ENCODE measurements at regions of chr9 and their contacts with region 1.

Region 1: GRCh38 chr9:120792898-120793765 is at the start of gene FBXW2:
- DNase-seq: peak; percentile 59
- ATAC-seq: peak; percentile 95
- H3K4me3 ChIP-seq: peak within 1 kb of the TSS; percentile 90
- H3K27ac ChIP-seq: peak within 1 kb of the TSS; percentile 86
- H3K4me1 ChIP-seq: peaks cover 9% of the 10 kb centered on the region
- H3K27me3 ChIP-seq: no peaks in the 10 kb centered on the region
- CTCF ChIP-seq: no peak
- EP300 ChIP-seq: no peak
- POLR2A ChIP-seq: peak; percentile 94
- RAD21 ChIP-seq: no peak
- polyA plus RNA-seq, gene FBXW2: 2.9 to 3.0 TPM

Region 2: GRCh38 chr9:120742951-120743416 is 50.1 kb before region 1 on chr9:
- CTCF ChIA-PET with region 1: no interaction called
- POLR2A ChIA-PET with region 1: no interaction called
- RAD21 ChIA-PET with region 1: no interaction called
- SMC1A ChIA-PET with region 1: no interaction called
- in situ Hi-C with region 1: no loop called
- intact Hi-C with region 1: no loop called
- DNase-seq: no peak
- ATAC-seq: peak; percentile 93
- H3K4me3 ChIP-seq: no peak overlapping the region
- H3K27ac ChIP-seq: no peak overlapping the region
- H3K4me1 ChIP-seq: no peaks in the 10 kb centered on the region
- H3K27me3 ChIP-seq: no peaks in the 10 kb centered on the region
- CTCF ChIP-seq: peak; percentile 72 to 84 (median 82)
- EP300 ChIP-seq: no peak
- POLR2A ChIP-seq: no peak
- RAD21 ChIP-seq: peak; percentile 76

Region 3: GRCh38 chr9:120921661-120922181 is 128.6 kb after region 1 on chr9:
- CTCF ChIA-PET with region 1: no interaction called
- POLR2A ChIA-PET with region 1: interaction called, 11 read pairs
- RAD21 ChIA-PET with region 1: no interaction called
- SMC1A ChIA-PET with region 1: interaction called, 4 read pairs
- in situ Hi-C with region 1: no loop called
- intact Hi-C with region 1: no loop called
- DNase-seq: no peak
- ATAC-seq: peak; percentile 12
- H3K4me3 ChIP-seq: peak overlapping the region; percentile 88
- H3K27ac ChIP-seq: peak overlapping the region; percentile 99
- H3K4me1 ChIP-seq: peaks cover 37% of the 10 kb centered on the region
- H3K27me3 ChIP-seq: no peaks in the 10 kb centered on the region
- CTCF ChIP-seq: no peak
- EP300 ChIP-seq: no peak
- POLR2A ChIP-seq: peak; percentile 73
- RAD21 ChIP-seq: no peak

Measured in GM12878 (cell line).